ENCODE measurements at regions of chr3 and their contacts with region 1.

Region 1: GRCh38 chr3:66407611-66408218 is 93.1 kb downstream of the LRIG1 start:
- DNase-seq: peak; percentile 80
- H3K4me3 Mint-ChIP-seq: no peak overlapping the region
- H3K27ac Mint-ChIP-seq: no peak overlapping the region
- H3K4me1 Mint-ChIP-seq: no peaks in the 10 kb centered on the region
- H3K27me3 Mint-ChIP-seq: no peaks in the 10 kb centered on the region

Region 2: DNA sequence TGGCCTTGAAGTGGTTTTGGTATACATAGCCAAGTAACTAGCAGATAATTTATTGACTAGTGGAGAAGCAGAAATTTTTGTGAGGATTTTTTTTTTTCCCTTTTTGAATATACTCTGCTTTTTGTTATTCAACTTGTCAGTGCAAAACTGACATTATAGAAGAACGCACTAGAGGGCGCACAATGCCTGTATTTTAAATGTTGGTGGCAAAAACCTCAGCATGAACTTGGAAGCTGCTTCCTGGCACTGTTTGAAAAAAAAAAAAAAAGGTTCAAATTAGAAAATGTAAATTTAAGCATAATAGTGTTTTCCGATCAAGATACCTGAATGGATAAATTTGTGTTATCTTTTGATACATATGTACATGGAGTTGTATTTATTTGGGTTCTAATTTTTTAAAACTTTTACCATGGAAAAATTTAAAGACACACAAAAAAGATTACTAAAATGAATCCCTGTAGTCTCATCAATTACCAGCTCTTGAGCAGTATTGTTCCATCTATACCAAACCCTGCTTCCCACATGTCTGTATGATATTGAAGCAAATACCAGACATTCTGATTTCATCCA is 130.9 kb before region 1 on chr3:
- CTCF ChIA-PET with region 1: interaction called, 16 read pairs
- POLR2A ChIA-PET with region 1: no interaction called
- intact Hi-C with region 1: no loop called
- DNase-seq: peak; percentile 68
- H3K4me3 Mint-ChIP-seq: no peak overlapping the region
- H3K27ac Mint-ChIP-seq: peak overlapping the region; percentile 24
- H3K4me1 Mint-ChIP-seq: peaks cover 37% of the 10 kb centered on the region
- H3K27me3 Mint-ChIP-seq: no peaks in the 10 kb centered on the region

Region 3: GRCh38 chr3:66464512-66464894 is 56.8 kb after region 1 on chr3:
- CTCF ChIA-PET with region 1: interaction called, 11 read pairs
- POLR2A ChIA-PET with region 1: no interaction called
- intact Hi-C with region 1: no loop called
- DNase-seq: no peak
- H3K4me3 Mint-ChIP-seq: no peak overlapping the region
- H3K27ac Mint-ChIP-seq: no peak overlapping the region
- H3K4me1 Mint-ChIP-seq: peaks cover 74% of the 10 kb centered on the region
- H3K27me3 Mint-ChIP-seq: no peaks in the 10 kb centered on the region

Region 4: DNA sequence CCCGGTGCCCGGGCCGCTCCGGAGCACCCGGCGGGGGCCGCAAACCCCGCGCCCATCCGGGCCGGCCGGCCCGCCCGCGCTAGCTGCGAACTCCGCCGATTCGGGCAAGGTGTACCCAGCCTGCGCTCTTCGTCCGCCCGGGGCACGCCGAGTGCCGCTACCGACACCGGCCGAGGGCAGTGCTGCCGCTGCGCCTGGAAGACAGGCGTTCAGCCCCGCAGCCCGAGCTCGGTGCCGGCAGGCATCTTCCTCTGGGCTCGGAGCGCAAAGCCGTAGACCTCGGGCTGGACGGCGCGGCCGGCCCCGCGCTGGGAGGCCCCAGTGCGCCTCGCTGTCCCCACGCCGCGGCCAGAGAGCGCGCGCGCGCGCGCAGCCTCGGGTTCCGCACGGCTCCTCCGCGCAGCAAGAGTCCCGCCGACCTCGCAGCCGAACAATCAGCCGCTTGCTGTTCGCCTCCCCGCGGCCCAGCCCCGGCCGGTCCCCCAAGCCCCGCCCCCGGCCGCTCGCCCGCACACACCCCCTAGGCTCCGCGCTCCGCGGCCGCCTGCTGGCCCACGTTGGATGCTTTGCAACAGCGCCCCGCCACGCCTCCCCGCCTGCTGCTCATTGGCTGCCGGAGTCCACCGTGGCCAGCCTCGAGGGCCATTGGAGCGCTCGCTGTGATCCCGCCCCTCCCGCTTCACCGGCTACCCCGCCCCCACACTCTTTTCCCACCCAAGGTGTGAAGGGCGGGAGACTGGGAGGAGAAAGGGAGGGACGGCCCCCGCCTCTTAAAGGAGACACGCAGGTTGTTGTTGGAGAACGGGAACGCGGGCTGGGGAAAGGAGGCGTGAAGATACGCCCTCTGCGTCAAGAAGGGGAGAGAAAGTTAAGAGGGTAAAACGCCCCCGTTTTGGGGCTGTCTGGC is 93.1 kb after region 1 on chr3 and contains the start of gene LRIG1:
- CTCF ChIA-PET with region 1: interaction called, 9 read pairs
- POLR2A ChIA-PET with region 1: no interaction called
- intact Hi-C with region 1: loop called (anchors 1 kb)
- DNase-seq: peak; percentile 99
- H3K4me3 Mint-ChIP-seq: peak within 1 kb of the TSS; percentile 96
- H3K27ac Mint-ChIP-seq: peak within 1 kb of the TSS; percentile 91
- H3K4me1 Mint-ChIP-seq: peaks cover 53% of the 10 kb centered on the region
- H3K27me3 Mint-ChIP-seq: no peaks in the 10 kb centered on the region
- total RNA-seq, gene LRIG1: 35.3 to 40.4 TPM

Region 5: GRCh38 chr3:66822186-66823008 is 414.7 kb after region 1 on chr3:
- CTCF ChIA-PET with region 1: interaction called, 71 read pairs
- POLR2A ChIA-PET with region 1: no interaction called
- intact Hi-C with region 1: no loop called
- DNase-seq: peak; percentile 76
- H3K4me3 Mint-ChIP-seq: no peak overlapping the region
- H3K27ac Mint-ChIP-seq: no peak overlapping the region
- H3K4me1 Mint-ChIP-seq: no peaks in the 10 kb centered on the region
- H3K27me3 Mint-ChIP-seq: no peaks in the 10 kb centered on the region

Measured in activated CD4-positive, alpha-beta memory T cell treated with anti-CD3 and anti-CD28 coated beads for 36 hours (primary cell).